ENCODE measurements at regions of chr15 and their contacts with region 1.

Region 1: DNA sequence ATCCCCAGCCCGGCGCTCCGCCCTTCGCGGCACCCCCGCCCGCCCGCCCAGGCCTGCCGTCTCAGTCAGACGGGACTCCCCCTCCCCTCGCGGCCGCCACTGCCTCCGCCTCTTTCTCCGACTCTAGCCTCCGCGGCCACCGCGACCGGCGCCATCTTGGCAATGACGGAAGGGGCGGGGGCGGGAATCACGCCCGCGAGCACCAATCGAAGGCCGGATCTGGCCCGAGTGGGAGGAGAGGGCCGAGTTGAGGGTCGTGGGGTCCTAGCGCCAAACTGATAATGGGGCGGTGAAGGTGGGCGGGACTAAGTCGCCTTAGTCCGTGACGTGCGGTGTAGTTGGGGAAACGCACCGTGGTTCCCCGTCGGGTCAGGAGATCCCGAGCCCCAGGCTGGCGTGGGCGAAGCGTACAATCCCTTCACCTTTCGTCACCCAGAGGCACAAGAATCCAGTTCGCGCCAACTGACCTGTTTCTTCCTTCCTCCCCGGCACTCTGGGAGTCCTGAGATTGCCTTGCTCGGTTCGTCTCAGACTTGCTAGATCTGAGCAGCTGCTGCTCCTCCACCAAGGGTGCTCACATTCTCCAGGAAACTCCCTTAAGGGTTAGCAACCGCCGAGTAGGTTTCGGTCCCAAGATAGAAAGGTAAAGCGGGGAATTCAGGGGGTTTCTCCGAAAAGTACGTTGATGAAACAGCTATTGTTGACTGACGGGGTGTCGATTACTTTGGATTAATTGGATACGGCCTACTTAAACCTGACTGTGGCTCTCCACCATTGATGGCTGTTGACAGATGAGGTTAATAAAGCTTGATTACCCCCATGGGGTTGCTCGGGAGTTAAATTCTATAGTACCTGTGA is at the start of gene DENND4A:
- DNase-seq: peak; percentile 96 to 99 (median 99)
- H3K4me3 ChIP-seq: peak within 1 kb of the TSS; percentile 94
- H3K4me3 Mint-ChIP-seq: peak within 1 kb of the TSS; percentile 91 to 98 (median 96)
- H3K27ac ChIP-seq: peak within 1 kb of the TSS; percentile 99
- H3K27ac Mint-ChIP-seq: peak within 1 kb of the TSS; percentile 98 to 100 (median 99)
- H3K4me1 ChIP-seq: peaks cover 32% of the 10 kb centered on the region
- H3K4me1 Mint-ChIP-seq: peaks cover 48 to 73% (median 70%) of the 10 kb centered on the region in 3 donors
- H3K27me3 ChIP-seq: no peaks in the 10 kb centered on the region
- H3K27me3 Mint-ChIP-seq: peaks cover 0 to 5% of the 10 kb centered on the region in 2 donors
- total RNA-seq, gene DENND4A: 47.2 to 54.3 TPM

Region 2: GRCh38 chr15:65805019-65805745 is 12.8 kb after region 1 on chr15:
- CTCF ChIA-PET with region 1: interaction called, 19 read pairs
- POLR2A ChIA-PET with region 1: interaction called, 40 read pairs
- DNase-seq: no peak
- H3K4me3 ChIP-seq: no peak overlapping the region
- H3K4me3 Mint-ChIP-seq: peak overlapping the region in 6 of 7 donors; percentile 91 to 97 (median 94)
- H3K27ac ChIP-seq: peak overlapping the region; percentile 39
- H3K27ac Mint-ChIP-seq: peak overlapping the region; percentile 74 to 97 (median 88)
- H3K4me1 ChIP-seq: peaks cover 38% of the 10 kb centered on the region
- H3K4me1 Mint-ChIP-seq: peaks cover 25 to 43% (median 37%) of the 10 kb centered on the region in 3 donors
- H3K27me3 ChIP-seq: no peaks in the 10 kb centered on the region
- H3K27me3 Mint-ChIP-seq: no peaks in the 10 kb centered on the region

Region 3: GRCh38 chr15:65818927-65819562 is 26.7 kb after region 1 on chr15:
- CTCF ChIA-PET with region 1: interaction called, 12 read pairs
- POLR2A ChIA-PET with region 1: interaction called, 24 read pairs
- DNase-seq: peak in 2 of 5 donors; percentile 87 to 89
- H3K4me3 ChIP-seq: peak overlapping the region; percentile 30
- H3K4me3 Mint-ChIP-seq: peak overlapping the region; percentile 52 to 75 (median 69)
- H3K27ac ChIP-seq: peak overlapping the region; percentile 72
- H3K27ac Mint-ChIP-seq: peak overlapping the region; percentile 95 to 98 (median 96)
- H3K4me1 ChIP-seq: peaks cover 44% of the 10 kb centered on the region
- H3K4me1 Mint-ChIP-seq: peaks cover 46 to 59% (median 55%) of the 10 kb centered on the region in 3 donors
- H3K27me3 ChIP-seq: no peaks in the 10 kb centered on the region
- H3K27me3 Mint-ChIP-seq: no peaks in the 10 kb centered on the region

Region 4: DNA sequence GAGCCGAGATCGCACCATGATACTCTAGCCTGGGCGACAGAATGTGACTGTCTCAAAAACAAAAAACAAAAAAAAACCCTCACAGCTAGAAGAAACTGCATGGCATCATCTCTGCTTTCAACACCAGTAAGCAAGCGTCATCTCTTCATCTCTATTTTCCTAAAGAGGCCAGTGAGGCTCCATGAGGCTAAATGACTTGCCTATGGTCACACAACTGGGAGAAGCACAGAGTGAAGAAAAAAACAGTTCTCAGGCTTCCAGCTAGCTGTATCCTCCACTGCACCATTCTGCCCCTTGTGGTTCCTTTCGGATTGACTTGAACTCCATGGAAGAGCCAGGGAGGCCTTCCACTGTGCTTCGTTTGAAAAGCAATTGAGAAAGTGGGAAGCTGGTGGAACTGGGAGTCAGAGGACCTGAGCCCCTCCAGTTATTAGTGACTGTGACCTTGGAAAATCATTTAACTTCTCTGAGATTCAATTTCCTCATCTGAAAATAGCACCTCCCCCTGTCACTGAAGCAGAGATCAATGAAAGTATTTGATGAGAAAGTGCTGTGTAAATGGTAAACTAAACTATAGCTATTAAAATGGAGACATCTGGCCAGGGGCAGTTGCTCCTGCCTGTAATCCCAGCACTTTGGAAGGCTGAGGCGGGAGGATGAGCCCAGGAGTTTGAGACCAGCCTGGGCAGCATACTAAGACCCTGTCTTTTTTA is 31.8 kb after region 1 on chr15:
- CTCF ChIA-PET with region 1: interaction called, 20 read pairs
- POLR2A ChIA-PET with region 1: interaction called, 24 read pairs
- DNase-seq: no peak
- H3K4me3 ChIP-seq: no peak overlapping the region
- H3K4me3 Mint-ChIP-seq: no peak overlapping the region
- H3K27ac ChIP-seq: no peak overlapping the region
- H3K27ac Mint-ChIP-seq: peak overlapping the region in 4 of 8 donors; percentile 4 to 50 (median 30)
- H3K4me1 ChIP-seq: peaks cover 57% of the 10 kb centered on the region
- H3K4me1 Mint-ChIP-seq: peaks cover 56 to 64% (median 57%) of the 10 kb centered on the region in 3 donors
- H3K27me3 ChIP-seq: no peaks in the 10 kb centered on the region
- H3K27me3 Mint-ChIP-seq: no peaks in the 10 kb centered on the region

Region 5: GRCh38 chr15:65832549-65833364 is 40.4 kb after region 1 on chr15:
- CTCF ChIA-PET with region 1: interaction called, 20 read pairs
- POLR2A ChIA-PET with region 1: interaction called, 19 read pairs
- DNase-seq: peak; percentile 34 to 68 (median 61)
- H3K4me3 ChIP-seq: peak overlapping the region; percentile 35
- H3K4me3 Mint-ChIP-seq: peak overlapping the region; percentile 14 to 89 (median 82)
- H3K27ac ChIP-seq: peak overlapping the region; percentile 71
- H3K27ac Mint-ChIP-seq: peak overlapping the region; percentile 78 to 100 (median 96)
- H3K4me1 ChIP-seq: peaks cover 50% of the 10 kb centered on the region
- H3K4me1 Mint-ChIP-seq: peaks cover 51 to 62% (median 58%) of the 10 kb centered on the region in 3 donors
- H3K27me3 ChIP-seq: no peaks in the 10 kb centered on the region
- H3K27me3 Mint-ChIP-seq: no peaks in the 10 kb centered on the region

Region 6: GRCh38 chr15:65869127-65869953 is 77.0 kb after region 1 on chr15 and contains the start of gene RAB11A:
- CTCF ChIA-PET with region 1: interaction called, 6 read pairs
- POLR2A ChIA-PET with region 1: interaction called, 24 read pairs
- DNase-seq: peak; percentile 92 to 97 (median 96)
- H3K4me3 ChIP-seq: peak within 1 kb of the TSS; percentile 97
- H3K4me3 Mint-ChIP-seq: peak within 1 kb of the TSS; percentile 97 to 100 (median 99)
- H3K27ac ChIP-seq: peak within 1 kb of the TSS; percentile 96
- H3K27ac Mint-ChIP-seq: peak within 1 kb of the TSS; percentile 97 to 100 (median 98)
- H3K4me1 ChIP-seq: peaks cover 25% of the 10 kb centered on the region
- H3K4me1 Mint-ChIP-seq: peaks cover 25 to 45% (median 43%) of the 10 kb centered on the region in 3 donors
- H3K27me3 ChIP-seq: no peaks in the 10 kb centered on the region
- H3K27me3 Mint-ChIP-seq: peaks cover 0 to 12% of the 10 kb centered on the region in 2 donors
- total RNA-seq, gene RAB11A: 158 to 159 TPM